Activated CD4-positive, alpha-beta T cell treated with anti-CD3 and anti-CD28 coated beads, Interleukin-2, amount 10 ng/mL, durations not matched to agents 7 days and 5 days (primary cell): ENCODE measurements at regions of chr9 and their contacts with region 1.

Region 1: DNA sequence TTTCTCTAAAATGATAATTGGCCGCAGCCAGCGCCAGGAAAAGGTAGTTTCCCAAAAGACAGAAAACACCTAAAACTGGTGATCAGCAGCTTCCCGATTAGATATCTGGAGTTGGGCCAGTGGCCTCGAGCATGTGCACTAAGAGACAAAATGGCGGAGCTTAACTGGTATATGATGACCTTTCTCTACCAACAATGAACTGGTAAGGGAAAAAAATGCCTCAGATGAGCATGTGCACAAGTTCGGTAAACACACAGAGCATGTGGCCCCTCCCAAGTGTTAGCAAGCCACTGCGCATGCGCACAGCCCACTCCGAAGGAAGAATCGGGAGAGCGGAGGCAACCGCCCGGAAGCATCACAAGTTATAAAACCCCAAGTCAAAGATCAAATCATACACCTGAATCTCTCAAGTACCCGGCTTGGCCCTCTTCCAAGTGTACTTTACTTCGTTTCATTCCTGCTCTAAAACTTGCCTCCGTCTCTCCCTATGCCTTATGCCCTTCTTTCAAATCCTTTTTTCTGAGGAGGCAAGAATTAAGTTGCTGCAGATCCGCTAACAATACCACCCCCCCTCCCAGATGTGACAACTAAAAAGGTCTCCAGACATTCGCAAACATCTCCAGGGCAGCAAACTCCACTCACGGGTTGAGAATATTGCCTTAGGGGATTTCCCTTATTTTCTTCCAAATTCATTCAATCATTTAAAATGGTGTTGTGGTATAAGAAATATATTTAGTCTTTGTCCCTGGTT is 15.0 kb upstream of the PTBP3 start:
- DNase-seq: peak; percentile 74
- H3K4me3 Mint-ChIP-seq: peak overlapping the region; percentile 50
- H3K27ac Mint-ChIP-seq: peak overlapping the region; percentile 81
- H3K4me1 Mint-ChIP-seq: peaks cover 13% of the 10 kb centered on the region
- H3K27me3 Mint-ChIP-seq: no peaks in the 10 kb centered on the region

Region 2: GRCh38 chr9:112322701-112323377 is 25.6 kb before region 1 on chr9:
- CTCF ChIA-PET with region 1: interaction called, 5 read pairs
- POLR2A ChIA-PET with region 1: interaction called, 10 read pairs
- DNase-seq: no peak
- H3K4me3 Mint-ChIP-seq: no peak overlapping the region
- H3K27ac Mint-ChIP-seq: no peak overlapping the region
- H3K4me1 Mint-ChIP-seq: peaks cover 54% of the 10 kb centered on the region
- H3K27me3 Mint-ChIP-seq: no peaks in the 10 kb centered on the region

Region 3: DNA sequence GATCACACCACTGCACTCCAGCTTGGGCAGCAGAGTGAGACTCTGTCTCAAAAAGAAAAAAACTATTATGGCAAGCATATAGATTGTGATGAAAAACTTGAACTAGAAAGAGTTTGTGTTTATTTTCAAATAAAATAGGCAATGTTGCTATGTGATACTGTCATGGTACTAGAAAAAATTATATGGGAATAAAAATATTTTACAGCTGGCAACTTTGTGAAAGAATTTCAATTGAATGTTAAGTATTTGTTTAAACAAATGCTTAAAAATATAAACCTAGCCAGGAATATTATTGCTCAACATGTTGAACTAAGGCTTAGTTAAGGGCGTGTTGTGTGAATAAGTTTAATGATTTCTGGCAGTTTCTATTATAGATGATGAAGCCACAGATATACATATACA is 63.2 kb after region 1 on chr9:
- CTCF ChIA-PET with region 1: no interaction called
- POLR2A ChIA-PET with region 1: no interaction called
- DNase-seq: no peak
- H3K4me3 Mint-ChIP-seq: no peak overlapping the region
- H3K27ac Mint-ChIP-seq: no peak overlapping the region
- H3K4me1 Mint-ChIP-seq: no peaks in the 10 kb centered on the region
- H3K27me3 Mint-ChIP-seq: no peaks in the 10 kb centered on the region